ENCODE measurements at regions of chr3 and their contacts with region 1.

Region 1: DNA sequence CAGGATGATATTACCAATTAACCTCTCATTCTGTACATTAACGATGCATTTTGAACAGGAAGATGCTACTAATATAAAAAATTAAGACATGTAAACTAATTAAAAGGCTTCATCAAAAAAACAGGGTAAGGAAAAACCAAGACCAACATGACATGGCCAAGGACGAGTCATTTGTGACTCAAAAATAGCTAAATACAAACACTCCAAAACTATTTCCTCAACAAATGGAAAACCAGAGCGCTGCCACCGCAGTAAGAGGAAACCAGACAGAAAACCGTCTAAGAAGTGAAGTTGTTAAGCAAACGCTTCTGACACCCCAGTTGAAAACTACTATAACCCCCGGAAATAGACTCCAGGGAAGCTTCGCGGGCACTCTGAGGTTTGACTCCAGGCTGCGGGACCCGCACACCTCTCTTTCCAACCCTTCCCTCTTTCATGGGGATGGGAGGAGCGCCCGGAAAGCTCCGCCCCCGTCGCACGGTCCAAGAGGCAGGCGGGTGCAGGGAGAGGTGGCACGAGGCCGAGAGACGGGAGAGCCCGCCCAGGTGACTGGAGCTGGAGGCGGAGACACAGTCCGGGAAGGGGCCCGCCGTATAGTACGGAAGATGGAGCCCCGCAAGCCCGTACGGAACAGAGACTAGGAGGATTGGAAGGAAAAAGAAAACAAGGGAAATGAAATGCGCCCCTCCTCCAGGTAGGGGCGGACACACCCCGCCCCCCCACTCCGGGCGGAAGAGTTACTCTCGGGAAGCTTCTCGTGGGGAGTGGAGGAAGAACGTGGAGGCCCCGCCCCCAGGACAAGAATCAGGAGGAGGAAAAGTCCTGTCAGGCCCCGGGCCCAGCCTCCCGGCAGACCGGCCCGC is 708 bp downstream of the DCAF1 start:
- DNase-seq: peak; percentile 94
- H3K4me3 ChIP-seq: peak overlapping the region; percentile 68 to 95 (median 80)
- H3K27ac ChIP-seq: peak overlapping the region; percentile 67
- H3K4me1 ChIP-seq: peaks cover 4% of the 10 kb centered on the region
- H3K27me3 ChIP-seq: no peaks in the 10 kb centered on the region
- CTCF ChIP-seq: no peak

Region 2: GRCh38 chr3:51243924-51244323 is 255.2 kb before region 1 on chr3:
- CTCF ChIA-PET with region 1: no interaction called
- dilution Hi-C with region 1: no loop called
- in situ Hi-C with region 1: no loop called
- intact Hi-C with region 1: no loop called
- DNase-seq: no peak
- H3K4me3 ChIP-seq: no peak overlapping the region
- H3K27ac ChIP-seq: no peak overlapping the region
- H3K4me1 ChIP-seq: no peaks in the 10 kb centered on the region
- H3K27me3 ChIP-seq: no peaks in the 10 kb centered on the region
- CTCF ChIP-seq: no peak

Region 3: GRCh38 chr3:51530490-51530889 is 31.4 kb after region 1 on chr3:
- CTCF ChIA-PET with region 1: no interaction called
- dilution Hi-C with region 1: loop called (anchors 5 kb)
- in situ Hi-C with region 1: loop called in 1 of 2 experiments (anchors 5 kb)
- intact Hi-C with region 1: no loop called
- DNase-seq: no peak
- H3K4me3 ChIP-seq: no peak overlapping the region
- H3K27ac ChIP-seq: no peak overlapping the region
- H3K4me1 ChIP-seq: no peaks in the 10 kb centered on the region
- H3K27me3 ChIP-seq: no peaks in the 10 kb centered on the region
- CTCF ChIP-seq: no peak

Region 4: GRCh38 chr3:51568036-51568435 is 68.9 kb after region 1 on chr3:
- CTCF ChIA-PET with region 1: no interaction called
- dilution Hi-C with region 1: loop called (anchors 5 kb)
- in situ Hi-C with region 1: no loop called
- intact Hi-C with region 1: no loop called
- DNase-seq: no peak
- H3K4me3 ChIP-seq: no peak overlapping the region
- H3K27ac ChIP-seq: no peak overlapping the region
- H3K4me1 ChIP-seq: no peaks in the 10 kb centered on the region
- H3K27me3 ChIP-seq: no peaks in the 10 kb centered on the region
- CTCF ChIP-seq: no peak

Region 5: DNA sequence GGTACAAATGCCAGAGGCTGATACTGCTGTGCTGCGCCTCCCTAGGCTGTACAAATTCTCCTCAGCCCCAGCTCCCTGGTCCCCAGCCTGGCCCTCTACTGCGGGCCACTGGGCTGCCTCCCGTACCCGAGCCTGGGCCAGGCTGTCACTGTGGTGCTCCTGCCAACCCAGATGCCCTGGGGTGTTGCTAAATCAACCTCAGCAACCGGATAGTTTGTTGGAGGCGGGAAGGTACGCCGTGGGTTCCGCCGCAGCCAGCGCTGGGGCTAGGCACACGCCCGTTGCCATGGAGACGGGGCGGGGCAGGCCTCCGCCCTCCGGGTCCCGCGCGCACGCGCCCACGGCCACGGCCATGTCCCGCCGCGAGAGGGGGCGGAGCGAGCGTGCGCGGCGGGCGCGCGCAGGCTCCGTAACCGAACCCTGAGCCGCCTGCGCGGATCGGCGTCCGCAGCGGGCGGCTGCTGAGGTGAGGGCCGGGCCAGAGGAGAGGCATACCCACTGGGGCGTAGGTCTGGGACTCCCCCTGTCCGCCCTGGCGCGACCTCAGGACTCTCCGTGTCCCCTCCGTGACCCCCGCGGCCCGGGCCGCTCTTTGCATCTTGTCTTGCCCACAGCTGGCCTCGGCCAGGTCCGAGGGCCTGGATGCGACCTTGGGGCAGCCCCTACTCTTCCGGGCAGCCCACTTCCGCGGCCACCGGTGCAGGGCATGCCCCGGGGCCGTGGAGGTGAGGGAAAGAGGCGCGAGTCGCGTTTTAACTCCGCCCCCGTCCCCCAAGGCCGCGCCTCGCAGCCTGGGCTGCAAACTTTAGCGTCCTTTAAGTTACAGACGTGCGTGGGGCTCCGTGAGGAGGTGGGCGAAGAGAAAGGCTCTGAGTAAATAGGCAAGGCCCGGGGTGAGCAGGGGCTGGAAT is 172.0 kb after region 1 on chr3 and contains the start of gene TEX264:
- CTCF ChIA-PET with region 1: interaction called, 31 read pairs
- dilution Hi-C with region 1: no loop called
- in situ Hi-C with region 1: no loop called
- intact Hi-C with region 1: loop called (anchors 1 kb)
- DNase-seq: peak; percentile 80
- H3K4me3 ChIP-seq: peak within 1 kb of the TSS; percentile 77 to 79 (median 79)
- H3K27ac ChIP-seq: peak within 1 kb of the TSS; percentile 75
- H3K4me1 ChIP-seq: peaks cover 61% of the 10 kb centered on the region
- H3K27me3 ChIP-seq: no peaks in the 10 kb centered on the region
- CTCF ChIP-seq: no peak
- total RNA-seq, gene TEX264: 36.0 to 49.7 TPM

Region 6: DNA sequence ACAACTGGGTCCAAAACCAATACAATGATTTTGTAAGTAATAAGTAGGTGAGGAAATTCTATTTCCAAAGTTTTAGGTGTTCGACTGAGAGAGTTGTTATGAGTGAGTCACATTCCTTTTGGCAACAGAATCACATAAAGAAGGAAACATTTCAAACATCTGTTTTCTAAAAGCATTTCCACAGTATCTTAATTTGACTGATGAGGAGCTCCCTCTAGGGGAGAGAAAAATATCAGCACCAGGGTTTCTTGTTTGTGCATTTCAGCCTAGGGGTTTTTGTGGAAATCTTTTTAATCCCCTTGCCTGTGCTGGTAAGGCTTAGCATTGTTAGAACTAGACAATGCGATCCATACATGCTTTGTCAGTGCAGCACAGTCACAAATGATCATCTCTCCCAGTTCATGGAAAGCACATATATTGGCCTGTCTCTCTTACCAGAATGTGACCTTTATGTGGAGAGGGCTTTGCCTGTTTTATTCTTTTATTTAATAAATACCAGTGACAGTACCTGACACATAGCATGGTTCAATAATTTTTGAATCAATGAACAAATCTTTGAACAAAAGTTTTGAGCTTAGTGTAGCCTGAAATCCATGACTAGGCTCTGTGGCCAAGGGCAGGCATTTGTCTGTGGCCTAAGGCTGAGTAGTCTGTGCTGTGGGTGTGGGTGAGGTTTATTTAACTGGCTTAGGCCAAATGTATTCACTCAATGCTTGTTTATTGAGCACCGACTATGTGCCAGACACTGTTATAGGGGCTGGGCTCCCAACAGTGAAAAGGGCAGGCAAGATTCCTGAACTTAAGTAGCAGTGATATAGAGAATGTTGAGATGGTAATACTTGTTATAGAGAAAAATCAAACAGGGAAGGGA is 301.0 kb after region 1 on chr3:
- CTCF ChIA-PET with region 1: no interaction called
- dilution Hi-C with region 1: no loop called
- in situ Hi-C with region 1: no loop called
- intact Hi-C with region 1: loop called (anchors 1 kb)
- DNase-seq: peak; percentile 65
- H3K4me3 ChIP-seq: no peak overlapping the region
- H3K27ac ChIP-seq: no peak overlapping the region
- H3K4me1 ChIP-seq: peaks cover 10% of the 10 kb centered on the region
- H3K27me3 ChIP-seq: no peaks in the 10 kb centered on the region
- CTCF ChIP-seq: peak; percentile 80 to 90